ENCODE measurements at regions of chr4 and their contacts with region 1.

Region 1: DNA sequence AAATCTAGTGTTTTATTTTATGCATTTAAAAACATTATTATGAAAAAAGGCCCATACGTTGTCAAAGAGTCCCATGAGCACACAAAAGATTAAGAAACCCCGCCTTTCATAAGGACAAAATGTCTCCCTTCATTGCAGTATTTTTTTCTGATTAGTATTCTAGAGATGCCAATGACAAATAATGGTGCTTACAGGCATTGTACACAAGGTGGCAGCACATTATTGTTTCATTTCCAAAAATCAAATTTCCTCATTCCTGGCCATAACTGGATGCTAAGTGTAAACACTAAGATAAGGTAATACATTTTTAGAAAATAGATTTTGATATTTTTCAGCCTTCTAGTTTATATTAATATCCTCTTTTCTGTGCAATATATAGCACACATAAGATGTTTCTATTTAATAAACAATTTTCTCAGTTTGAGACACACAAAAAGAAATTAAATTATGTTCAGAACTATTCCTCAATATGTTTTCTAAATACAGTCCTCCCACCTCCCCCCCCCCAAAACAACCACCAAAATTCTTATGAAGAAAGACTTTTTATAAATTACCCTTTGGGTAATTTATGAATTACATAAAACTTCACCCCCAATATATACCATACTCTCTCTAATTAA is 47.7 kb downstream of the TIGD2 start:
- DNase-seq: peak; percentile 33 to 67
- H3K4me3 ChIP-seq: no peak overlapping the region
- H3K4me1 ChIP-seq: no peaks in the 10 kb centered on the region
- H3K27me3 ChIP-seq: no peaks in the 10 kb centered on the region

Region 2: GRCh38 chr4:89039730-89040338 is 119.2 kb before region 1 on chr4:
- in situ Hi-C with region 1: no loop called
- DNase-seq: no peak
- H3K4me3 ChIP-seq: no peak overlapping the region
- H3K4me1 ChIP-seq: no peaks in the 10 kb centered on the region
- H3K27me3 ChIP-seq: no peaks in the 10 kb centered on the region

Region 3: DNA sequence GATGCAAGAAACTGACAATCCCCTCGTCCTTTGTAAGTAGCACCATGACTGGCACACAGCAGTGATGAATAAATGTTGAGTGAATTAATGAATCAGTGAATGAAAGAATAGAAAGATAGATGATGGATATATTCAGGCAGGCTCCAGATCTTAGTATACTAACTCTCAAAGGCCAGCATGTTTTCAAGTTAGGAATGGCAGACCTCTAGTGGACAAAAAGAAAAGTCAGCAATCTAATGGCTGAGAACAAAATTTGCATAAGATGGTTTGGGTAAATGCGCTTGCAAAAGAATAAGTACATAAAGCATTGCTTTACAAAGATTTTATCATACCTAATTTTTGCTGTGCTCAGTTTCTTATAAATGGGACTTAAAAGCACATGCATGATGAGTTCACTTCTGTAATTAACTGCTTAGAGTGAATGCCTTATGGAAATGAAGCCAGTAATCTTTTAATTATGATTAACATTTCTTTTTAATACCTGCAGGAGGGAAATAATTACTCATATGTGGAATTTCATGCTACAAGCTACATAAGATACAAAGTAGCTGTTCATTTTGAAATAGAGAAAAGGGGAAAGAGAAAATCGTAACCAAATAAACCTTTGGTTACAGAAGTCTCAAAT is 275.5 kb after region 1 on chr4:
- in situ Hi-C with region 1: loop called (anchors 25 kb)
- DNase-seq: peak; percentile 14 to 68
- H3K4me3 ChIP-seq: no peak overlapping the region
- H3K4me1 ChIP-seq: no peaks in the 10 kb centered on the region; the same call in 1 of the 2 replicates
- H3K27me3 ChIP-seq: no peaks in the 10 kb centered on the region

Measured in HAP-1 (cell line).